Endothelial cell of umbilical vein (primary cell): ENCODE measurements at regions of chr1 and their contacts with region 1.

Region 1: GRCh38 chr1:182962554-182963115 is 9.7 kb upstream of the SHCBP1L start:
- DNase-seq: peak; percentile 91
- H3K4me3 ChIP-seq: peak overlapping the region in 2 of 3 experiments; percentile 7 to 60
- H3K27ac ChIP-seq: peak overlapping the region; percentile 73
- H3K4me1 ChIP-seq: peaks cover 6% of the 10 kb centered on the region
- H3K27me3 ChIP-seq: no peaks in the 10 kb centered on the region
- CTCF ChIP-seq: peak; percentile 83 to 86
- POLR2A ChIP-seq: peak; percentile 63

Region 2: DNA sequence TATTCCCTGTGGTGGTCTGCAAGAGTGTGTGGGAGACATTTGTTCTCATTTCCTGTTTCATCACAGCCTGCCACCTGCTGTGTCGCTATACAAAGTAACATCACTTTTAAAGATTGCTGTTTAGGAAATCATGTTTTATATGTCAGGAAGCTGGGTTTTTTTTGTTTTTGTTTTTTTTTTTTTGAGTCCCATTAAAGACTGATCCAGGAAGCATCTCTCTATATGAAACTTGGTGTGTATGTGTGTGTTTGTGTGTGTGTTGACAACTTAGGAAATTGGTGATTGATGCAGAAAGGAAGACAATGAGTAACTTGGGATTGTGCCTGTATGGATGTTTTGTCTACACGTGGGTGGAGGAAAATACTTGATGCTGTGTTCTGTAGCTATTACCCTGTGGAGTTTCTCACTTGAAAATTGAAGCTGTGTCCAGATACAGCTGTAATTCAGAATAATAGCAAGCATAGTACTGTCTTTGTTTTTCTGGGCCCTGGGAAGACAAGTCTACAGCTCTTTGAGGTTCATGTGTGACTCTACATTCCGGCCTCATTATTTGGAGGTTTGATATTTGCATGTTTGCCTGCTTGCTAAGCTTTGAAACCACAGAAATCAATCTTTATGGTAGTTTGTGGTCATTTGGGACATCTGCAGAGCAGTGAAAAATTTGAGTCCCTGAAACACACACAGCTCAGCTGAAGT is 108.4 kb after region 1 on chr1:
- CTCF ChIA-PET with region 1: interaction called, 20 read pairs
- POLR2A ChIA-PET with region 1: no interaction called
- dilution Hi-C with region 1: no loop called
- intact Hi-C with region 1: loop called (anchors 1 kb)
- DNase-seq: peak; percentile 94
- H3K4me3 ChIP-seq: no peak overlapping the region
- H3K27ac ChIP-seq: peak overlapping the region; percentile 44
- H3K4me1 ChIP-seq: peaks cover 22% of the 10 kb centered on the region
- H3K27me3 ChIP-seq: no peaks in the 10 kb centered on the region
- CTCF ChIP-seq: no peak
- POLR2A ChIP-seq: no peak

Region 3: GRCh38 chr1:183139281-183139942 is 176.8 kb after region 1 on chr1:
- CTCF ChIA-PET with region 1: interaction called, 7 read pairs
- POLR2A ChIA-PET with region 1: no interaction called
- dilution Hi-C with region 1: no loop called
- intact Hi-C with region 1: loop called (anchors 1 kb)
- DNase-seq: peak; percentile 96
- H3K4me3 ChIP-seq: peak overlapping the region in 1 of 3 experiments; percentile 19
- H3K27ac ChIP-seq: peak overlapping the region; percentile 94
- H3K4me1 ChIP-seq: peaks cover 25% of the 10 kb centered on the region
- H3K27me3 ChIP-seq: no peaks in the 10 kb centered on the region
- CTCF ChIP-seq: no peak
- POLR2A ChIP-seq: peak; percentile 82

Region 4: GRCh38 chr1:183234660-183235476 is 272.2 kb after region 1 on chr1:
- CTCF ChIA-PET with region 1: interaction called, 47 read pairs
- POLR2A ChIA-PET with region 1: interaction called, 4 read pairs
- dilution Hi-C with region 1: no loop called
- intact Hi-C with region 1: loop called (anchors 1 kb)
- DNase-seq: peak; percentile 98
- H3K4me3 ChIP-seq: peak overlapping the region; percentile 13 to 77 (median 18)
- H3K27ac ChIP-seq: peak overlapping the region; percentile 81
- H3K4me1 ChIP-seq: peaks cover 30% of the 10 kb centered on the region
- H3K27me3 ChIP-seq: no peaks in the 10 kb centered on the region
- CTCF ChIP-seq: peak; percentile 69 to 71
- POLR2A ChIP-seq: no peak

Region 5: GRCh38 chr1:183471743-183472487 is 509.3 kb after region 1 on chr1:
- CTCF ChIA-PET with region 1: interaction called, 3 read pairs
- POLR2A ChIA-PET with region 1: no interaction called
- dilution Hi-C with region 1: no loop called
- intact Hi-C with region 1: loop called (anchors 2 kb)
- DNase-seq: peak; percentile 96
- H3K4me3 ChIP-seq: peak overlapping the region; percentile 62 to 91 (median 89)
- H3K27ac ChIP-seq: peak overlapping the region; percentile 90
- H3K4me1 ChIP-seq: peaks cover 19% of the 10 kb centered on the region
- H3K27me3 ChIP-seq: no peaks in the 10 kb centered on the region
- CTCF ChIP-seq: peak in 1 of 2 donors; percentile 11
- POLR2A ChIP-seq: no peak